Posterior cingulate gyrus (tissue), 11 donors: ENCODE measurements at regions of chr1 and their contacts with region 1.

Region 1: GRCh38 chr1:58546520-58547308 is at the start of gene OMA1:
- DNase-seq: peak; percentile 89 to 99 (median 92)

Region 2: GRCh38 chr1:56911098-56911938 is 1635.4 kb before region 1 on chr1:
- intact Hi-C with region 1: no loop called
- DNase-seq: no peak

Region 3: GRCh38 chr1:58515794-58516401 is 30.8 kb before region 1 on chr1:
- intact Hi-C with region 1: loop called (anchors 1 kb)
- DNase-seq: peak in 4 of 10 donors; percentile 4 to 67 (median 14)